Posterior cingulate gyrus (tissue), 11 donors: ENCODE measurements at regions of chr14 and their contacts with region 1.

Region 1: GRCh38 chr14:66359500-66359899 is 126.7 kb upstream of the CCDC196 start:
- DNase-seq: peak in 1 of 10 donors; percentile 11

Region 2: GRCh38 chr14:66403183-66403582 is 43.7 kb after region 1 on chr14:
- intact Hi-C with region 1: loop called (anchors 2 kb)
- DNase-seq: no peak

Region 3: DNA sequence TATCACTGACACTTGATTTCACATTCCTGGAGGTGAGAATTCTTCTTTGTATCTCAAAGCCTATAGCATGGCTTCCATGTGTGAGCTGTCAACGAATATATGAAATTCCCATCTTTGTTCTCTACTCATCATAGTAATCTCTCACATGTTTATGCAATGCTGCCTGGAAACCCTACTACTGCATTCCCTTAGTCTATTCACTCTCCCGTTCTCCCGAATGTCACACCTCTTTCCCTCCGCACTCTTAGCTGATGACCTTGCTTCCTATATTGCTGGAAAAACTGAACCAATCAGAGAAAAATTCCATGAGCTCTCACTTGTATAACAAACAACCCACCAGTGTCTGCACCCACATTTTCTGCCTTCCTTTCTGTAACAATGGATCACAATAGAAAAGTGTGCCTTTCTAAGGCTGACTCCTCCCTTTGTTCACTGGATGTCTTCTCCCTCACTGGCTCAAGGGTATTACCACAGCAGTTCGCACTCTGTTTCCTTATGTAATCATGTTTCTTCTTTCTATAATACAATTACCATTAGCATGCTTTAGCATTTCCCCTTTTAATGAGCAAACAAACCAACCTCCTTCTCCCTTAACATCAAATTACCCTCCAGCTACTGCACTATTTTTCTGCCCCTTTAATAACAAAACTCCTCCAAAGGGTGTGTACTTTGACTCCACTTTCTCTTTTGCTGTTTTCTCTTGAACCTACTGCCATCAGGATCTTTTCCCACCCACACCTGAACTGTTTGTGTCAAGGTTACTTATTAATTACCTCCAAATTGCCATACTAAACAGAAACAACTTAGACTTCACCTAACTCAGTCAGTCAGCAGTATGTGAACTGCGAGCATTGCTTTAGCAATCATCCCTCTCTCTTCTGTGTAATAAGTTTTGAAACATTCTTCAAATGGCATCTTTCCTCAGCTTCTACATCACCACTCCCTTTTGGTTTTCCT is 62.8 kb after region 1 on chr14:
- intact Hi-C with region 1: no loop called
- DNase-seq: no peak